CD8-positive, alpha-beta memory T cell (primary cell): ENCODE measurements at regions of chr3 and their contacts with region 1.

Region 1: DNA sequence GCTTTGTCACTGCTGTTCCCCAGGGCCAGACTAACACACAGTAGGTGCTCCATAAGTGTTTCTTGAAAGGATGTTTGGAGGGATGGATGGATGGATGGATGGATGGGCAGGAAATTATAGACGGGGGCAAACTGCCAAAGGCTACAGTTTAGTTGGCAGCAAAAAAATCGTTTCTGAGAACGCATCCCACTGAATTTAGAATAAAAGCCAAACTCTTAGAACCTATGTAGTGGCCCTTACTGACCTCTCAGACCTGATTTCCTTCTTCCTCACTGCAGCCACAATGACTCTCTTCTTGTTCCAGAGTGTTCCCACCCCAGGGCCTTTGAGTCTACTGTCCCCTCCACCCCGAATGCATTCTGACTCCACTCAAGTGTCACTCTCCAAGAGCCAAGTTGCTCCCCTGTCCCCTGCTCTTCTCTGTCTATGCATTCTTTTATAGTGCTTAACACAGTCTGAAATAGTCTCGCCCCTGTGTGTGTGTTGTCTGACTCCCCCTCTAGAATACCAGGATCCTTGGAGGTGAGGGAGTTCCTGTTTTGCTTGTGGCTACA is 5.2 kb upstream of the GATA2 start:
- DNase-seq: no peak
- H3K4me3 ChIP-seq: no peak overlapping the region
- H3K4me3 Mint-ChIP-seq: peak overlapping the region; percentile 30 to 71 (median 58)
- H3K27ac ChIP-seq: no peak overlapping the region
- H3K27ac Mint-ChIP-seq: no peak overlapping the region
- H3K4me1 ChIP-seq: no peaks in the 10 kb centered on the region
- H3K4me1 Mint-ChIP-seq: peaks cover 7 to 21% (median 8%) of the 10 kb centered on the region in 3 donors
- H3K27me3 ChIP-seq: peaks cover 28% of the 10 kb centered on the region
- H3K27me3 Mint-ChIP-seq: peaks cover 55 to 90% of the 10 kb centered on the region in 2 donors

Region 2: DNA sequence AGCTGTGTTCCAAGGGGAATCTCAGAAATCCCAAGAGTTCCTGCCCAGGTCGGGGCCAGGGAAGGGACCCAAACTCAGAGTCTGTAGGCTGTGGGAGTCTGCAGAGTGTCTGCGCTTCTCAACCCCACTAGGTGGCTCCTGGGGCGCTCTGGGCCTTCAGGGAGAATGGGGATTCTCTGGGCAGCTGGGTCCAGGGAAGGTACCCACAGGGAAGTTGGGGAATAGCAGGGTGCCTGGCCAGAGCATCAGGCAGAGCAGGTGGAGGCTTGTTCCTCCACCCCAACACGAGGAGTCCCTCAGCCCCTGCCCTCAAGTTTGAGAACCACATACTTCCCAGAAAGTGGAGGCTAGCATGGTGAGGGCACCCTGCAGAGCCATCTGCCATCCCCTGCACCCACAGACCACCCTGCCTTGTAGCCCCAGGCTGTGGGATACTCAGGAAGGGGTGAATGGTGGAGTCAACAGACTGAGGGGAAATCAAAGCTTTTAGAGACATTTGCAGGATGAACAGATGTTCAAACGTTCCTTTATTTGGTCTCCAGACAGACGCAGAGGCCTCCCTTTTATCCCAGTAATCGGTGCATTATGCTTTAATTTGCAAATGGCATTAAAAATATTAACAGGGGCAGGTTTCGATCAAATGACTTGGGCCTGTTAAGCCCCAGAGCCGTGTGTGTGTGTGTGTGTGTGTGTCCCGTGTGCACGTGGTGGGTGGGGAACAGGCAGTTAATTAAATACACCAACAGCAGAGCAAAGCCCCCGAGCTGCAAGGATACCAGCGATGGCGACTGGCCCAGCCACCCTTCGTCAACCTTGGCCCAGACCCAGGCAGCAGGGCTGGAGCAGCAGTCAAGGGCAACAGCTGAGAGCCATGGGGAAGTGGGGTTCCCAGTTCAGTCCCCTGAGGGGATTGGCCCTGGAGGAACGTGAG is 89.2 kb before region 1 on chr3:
- CTCF ChIA-PET with region 1: no interaction called
- POLR2A ChIA-PET with region 1: no interaction called
- DNase-seq: no peak
- H3K4me3 ChIP-seq: no peak overlapping the region
- H3K4me3 Mint-ChIP-seq: no peak overlapping the region
- H3K27ac ChIP-seq: peak overlapping the region; percentile 65
- H3K27ac Mint-ChIP-seq: peak overlapping the region in 1 of 8 donors; percentile 65
- H3K4me1 ChIP-seq: no peaks in the 10 kb centered on the region
- H3K4me1 Mint-ChIP-seq: peaks cover 0 to 2% (median 0%) of the 10 kb centered on the region in 3 donors
- H3K27me3 ChIP-seq: no peaks in the 10 kb centered on the region
- H3K27me3 Mint-ChIP-seq: no peaks in the 10 kb centered on the region

Region 3: GRCh38 chr3:128426128-128426921 is 71.9 kb before region 1 on chr3:
- CTCF ChIA-PET with region 1: interaction called, 11 read pairs
- POLR2A ChIA-PET with region 1: no interaction called
- DNase-seq: peak; percentile 23 to 62 (median 45)
- H3K4me3 ChIP-seq: no peak overlapping the region
- H3K4me3 Mint-ChIP-seq: no peak overlapping the region
- H3K27ac ChIP-seq: no peak overlapping the region
- H3K27ac Mint-ChIP-seq: no peak overlapping the region
- H3K4me1 ChIP-seq: no peaks in the 10 kb centered on the region
- H3K4me1 Mint-ChIP-seq: no peaks in the 10 kb centered on the region
- H3K27me3 ChIP-seq: no peaks in the 10 kb centered on the region
- H3K27me3 Mint-ChIP-seq: peaks cover 12 to 28% of the 10 kb centered on the region in 2 donors

Region 4: GRCh38 chr3:128448491-128448890 is 49.7 kb before region 1 on chr3:
- CTCF ChIA-PET with region 1: no interaction called
- POLR2A ChIA-PET with region 1: no interaction called
- DNase-seq: peak in 2 of 5 donors; percentile 29 to 48
- H3K4me3 ChIP-seq: no peak overlapping the region
- H3K4me3 Mint-ChIP-seq: peak overlapping the region in 5 of 7 donors; percentile 17 to 89 (median 48)
- H3K27ac ChIP-seq: no peak overlapping the region
- H3K27ac Mint-ChIP-seq: peak overlapping the region; percentile 3 to 89 (median 62)
- H3K4me1 ChIP-seq: peaks cover 18% of the 10 kb centered on the region
- H3K4me1 Mint-ChIP-seq: peaks cover 10 to 13% (median 11%) of the 10 kb centered on the region in 3 donors
- H3K27me3 ChIP-seq: no peaks in the 10 kb centered on the region
- H3K27me3 Mint-ChIP-seq: peaks cover 6 to 11% of the 10 kb centered on the region in 2 donors